ENCODE measurements at regions of chr15 and their contacts with region 1.

Region 1: GRCh38 chr15:34342737-34343575 is at the starts of genes NOP10 and NUTM1:
- DNase-seq: peak; percentile 95
- H3K4me3 ChIP-seq: peak within 1 kb of the TSS; percentile 67
- H3K27ac ChIP-seq: peak within 1 kb of the TSS; percentile 86
- H3K4me1 ChIP-seq: peaks cover 33% of the 10 kb centered on the region
- H3K27me3 ChIP-seq: no peaks in the 10 kb centered on the region
- CTCF ChIP-seq: peak; percentile 98
- total RNA-seq, gene NOP10: 200 and 208 TPM in 2 replicates
- total RNA-seq, gene NUTM1: not detected in 2 replicates

Region 2: GRCh38 chr15:33801954-33802353 is 541.0 kb before region 1 on chr15:
- CTCF ChIA-PET with region 1: no interaction called
- POLR2A ChIA-PET with region 1: no interaction called
- intact Hi-C with region 1: no loop called
- DNase-seq: no peak
- H3K4me3 ChIP-seq: no peak overlapping the region
- H3K27ac ChIP-seq: no peak overlapping the region
- H3K4me1 ChIP-seq: no peaks in the 10 kb centered on the region
- H3K27me3 ChIP-seq: peaks cover 10% of the 10 kb centered on the region
- CTCF ChIP-seq: no peak

Region 3: DNA sequence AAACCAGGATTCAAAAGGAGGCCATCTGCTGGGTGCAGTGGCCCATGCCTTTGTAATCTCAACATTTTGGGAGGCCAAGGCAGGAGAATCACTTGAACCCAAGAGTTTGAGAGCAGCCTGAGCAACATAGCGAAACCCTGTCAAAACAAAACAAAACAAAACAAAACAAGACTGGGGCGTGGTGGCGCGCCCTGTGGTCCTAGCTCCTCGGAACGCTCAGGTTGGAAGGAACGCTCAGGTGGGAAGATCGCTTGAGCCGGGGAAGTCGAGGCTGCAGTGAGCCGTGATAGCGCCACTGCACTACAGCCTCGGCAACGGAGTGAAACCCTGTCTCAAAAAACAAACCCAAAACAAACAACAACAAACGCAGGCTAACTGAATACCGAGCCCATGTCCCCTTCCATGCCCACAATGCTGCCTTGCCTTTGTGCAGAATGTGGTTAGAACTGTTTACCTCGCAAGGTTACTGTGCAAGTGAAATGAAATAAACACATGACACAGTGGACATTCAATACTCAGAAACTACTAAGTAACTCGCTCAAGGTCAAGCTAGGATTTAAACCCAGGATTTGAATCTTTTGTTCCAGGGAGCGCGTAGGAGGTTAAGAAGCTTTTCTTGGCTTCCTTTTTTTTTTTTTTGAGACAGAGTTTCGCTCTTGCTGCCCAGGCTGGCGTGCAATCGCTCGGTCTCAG is 118.9 kb before region 1 on chr15:
- CTCF ChIA-PET with region 1: no interaction called
- POLR2A ChIA-PET with region 1: no interaction called
- intact Hi-C with region 1: loop called (anchors 5 kb)
- DNase-seq: peak; percentile 15
- H3K4me3 ChIP-seq: peak overlapping the region; percentile 69
- H3K27ac ChIP-seq: peak overlapping the region; percentile 91
- H3K4me1 ChIP-seq: peaks cover 8% of the 10 kb centered on the region
- H3K27me3 ChIP-seq: no peaks in the 10 kb centered on the region
- CTCF ChIP-seq: no peak

Region 4: DNA sequence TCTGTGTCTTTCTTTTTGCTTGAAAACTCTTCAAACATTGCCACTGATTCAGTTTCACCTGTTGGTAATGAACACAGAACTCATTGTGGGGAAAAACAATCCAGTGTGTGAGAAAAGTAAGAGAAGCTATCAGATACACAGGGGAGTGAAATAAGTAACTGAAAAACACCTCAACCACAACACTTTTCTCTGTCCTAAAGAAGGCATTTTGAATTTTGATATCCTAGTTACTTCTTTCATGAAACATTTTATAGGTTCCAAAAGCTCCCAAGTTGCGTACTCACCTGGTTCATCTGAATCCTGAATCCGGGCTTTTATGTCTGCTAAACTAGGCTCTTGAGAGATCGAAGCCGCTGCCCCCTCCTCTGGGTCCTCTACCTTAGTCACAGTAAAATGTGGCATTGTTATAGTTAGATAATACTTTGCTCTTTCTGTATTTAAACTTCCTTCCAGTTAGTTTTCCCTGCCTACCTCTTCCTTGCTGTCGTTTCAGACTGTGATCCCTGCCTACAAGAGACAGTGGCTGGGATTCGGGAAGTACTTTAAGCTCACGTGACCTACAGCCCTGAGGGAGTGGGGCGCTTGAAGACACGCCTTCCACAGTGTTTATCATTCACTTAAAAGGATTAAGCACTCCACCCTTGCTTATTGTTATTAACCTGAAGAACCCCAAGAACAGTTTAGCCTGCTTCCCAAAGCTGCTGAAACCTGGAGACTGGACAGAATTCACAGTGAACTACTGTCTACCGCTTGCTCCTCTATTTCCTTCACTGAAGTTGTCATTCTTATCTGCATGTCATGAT is 24.5 kb before region 1 on chr15:
- CTCF ChIA-PET with region 1: no interaction called
- POLR2A ChIA-PET with region 1: interaction called, 11 read pairs
- intact Hi-C with region 1: no loop called
- DNase-seq: peak; percentile 79
- H3K4me3 ChIP-seq: peak overlapping the region; percentile 50
- H3K27ac ChIP-seq: peak overlapping the region; percentile 51
- H3K4me1 ChIP-seq: peaks cover 6% of the 10 kb centered on the region
- H3K27me3 ChIP-seq: no peaks in the 10 kb centered on the region
- CTCF ChIP-seq: no peak

Region 5: DNA sequence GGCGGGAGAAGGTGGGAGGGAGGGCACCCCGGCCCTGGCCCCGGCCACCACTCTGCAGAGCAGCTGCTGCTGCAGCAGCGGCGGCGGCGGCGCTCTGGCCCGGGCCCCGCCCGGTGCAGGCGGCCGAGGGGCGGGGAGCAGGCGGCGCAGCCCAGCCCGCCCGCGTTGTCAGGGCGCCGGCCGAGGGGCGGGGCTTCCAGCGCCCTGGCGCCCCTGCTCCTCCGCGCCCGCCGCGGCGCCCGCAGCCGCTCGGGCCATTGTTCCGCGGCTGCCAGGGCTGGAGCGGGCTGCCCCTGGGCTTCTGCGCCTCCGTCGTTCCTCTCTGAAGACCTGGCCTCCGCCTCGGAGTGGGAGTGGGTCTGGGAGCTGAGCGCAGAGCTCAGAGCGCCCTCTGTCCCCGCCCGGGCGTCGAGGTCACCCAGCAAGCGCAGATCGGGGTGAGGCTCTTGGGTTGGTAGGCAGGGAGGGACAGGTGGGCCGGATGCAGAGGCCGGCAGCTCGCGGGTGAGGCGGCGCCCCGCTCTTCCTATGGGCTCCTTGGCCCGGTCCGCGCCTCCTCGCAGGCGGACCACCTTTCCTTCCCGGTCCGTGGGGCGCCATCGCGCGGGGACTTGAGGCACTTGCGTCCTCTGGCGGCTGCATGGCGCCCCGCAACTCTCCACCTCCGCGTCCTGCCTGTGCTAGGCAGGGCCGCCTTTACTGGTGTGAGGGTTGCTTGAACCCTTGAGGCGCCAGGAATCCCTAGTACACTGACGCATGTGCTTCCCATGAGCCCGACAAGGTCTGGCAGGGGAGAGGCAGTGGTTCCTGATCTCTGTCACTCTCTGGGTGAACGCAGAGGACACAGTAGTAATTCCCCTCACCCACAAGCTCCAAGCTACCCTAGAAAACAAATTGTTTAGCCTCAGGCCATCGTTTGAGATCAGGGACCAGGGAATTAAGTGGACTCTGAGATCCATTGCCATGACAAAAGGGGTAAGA is 24.4 kb after region 1 on chr15 and contains the start of gene LPCAT4:
- CTCF ChIA-PET with region 1: interaction called, 5 read pairs
- POLR2A ChIA-PET with region 1: no interaction called
- intact Hi-C with region 1: loop called (anchors 1 kb)
- DNase-seq: peak; percentile 92
- H3K4me3 ChIP-seq: peak within 1 kb of the TSS; percentile 82
- H3K27ac ChIP-seq: peak within 1 kb of the TSS; percentile 96
- H3K4me1 ChIP-seq: peaks cover 8% of the 10 kb centered on the region
- H3K27me3 ChIP-seq: no peaks in the 10 kb centered on the region
- CTCF ChIP-seq: peak; percentile 98
- total RNA-seq, gene LPCAT4: 37.8 and 53.1 TPM in 2 replicates

Region 6: GRCh38 chr15:34587717-34588674 is 245.0 kb after region 1 on chr15:
- CTCF ChIA-PET with region 1: no interaction called
- POLR2A ChIA-PET with region 1: no interaction called
- intact Hi-C with region 1: loop called (anchors 1 kb)
- DNase-seq: peak; percentile 76
- H3K4me3 ChIP-seq: peak overlapping the region; percentile 1
- H3K27ac ChIP-seq: no peak overlapping the region
- H3K4me1 ChIP-seq: peaks cover 5% of the 10 kb centered on the region
- H3K27me3 ChIP-seq: no peaks in the 10 kb centered on the region
- CTCF ChIP-seq: peak; percentile 83